ENCODE measurements at regions of chr10 and their contacts with region 1.

Region 1: DNA sequence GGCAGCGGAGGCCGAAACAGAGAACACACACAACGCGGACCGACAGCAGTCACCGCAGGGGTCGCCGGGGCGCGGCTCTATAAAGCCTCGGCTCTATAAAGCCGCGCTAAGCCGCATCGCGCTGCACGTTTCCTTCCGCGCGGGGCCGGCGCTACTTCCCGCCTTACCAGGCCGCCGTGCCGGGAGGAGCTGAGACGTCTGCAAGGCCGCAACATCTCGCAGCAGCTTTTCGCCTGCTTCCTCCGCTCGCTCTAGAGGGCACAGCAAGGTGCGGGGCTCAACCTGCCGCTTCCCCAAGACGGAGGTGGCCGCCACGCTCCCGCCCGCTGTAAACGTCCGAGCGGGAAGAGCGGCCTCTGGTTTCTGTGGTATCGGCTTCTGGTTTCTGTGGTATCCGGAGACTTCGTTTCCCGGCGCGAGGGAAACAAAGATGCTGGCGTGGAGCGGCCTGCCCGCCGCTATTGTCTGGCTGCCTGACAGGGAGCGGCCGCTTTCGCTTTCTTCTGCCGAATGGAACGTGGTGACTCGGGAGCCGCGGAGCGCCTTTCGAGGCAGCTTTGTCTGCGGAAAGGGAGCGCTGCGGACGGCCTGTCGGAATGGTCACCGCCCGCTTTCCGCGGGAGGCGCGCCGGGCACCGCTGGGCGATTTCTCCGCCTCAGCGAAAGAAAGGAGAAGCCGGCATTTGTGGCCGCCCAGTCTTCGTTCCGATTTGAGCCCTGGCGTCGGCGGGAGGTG is 91.8 kb downstream of the SPAG6 start:
- DNase-seq: peak; percentile 89 to 95 (median 92)
- H3K4me3 ChIP-seq: peak overlapping the region; percentile 74
- H3K27ac ChIP-seq: peak overlapping the region; percentile 79 to 96
- H3K4me1 ChIP-seq: peaks cover 5% of the 10 kb centered on the region
- H3K27me3 ChIP-seq: no peaks in the 10 kb centered on the region
- CTCF ChIP-seq: no peak
- EP300 ChIP-seq: no peak
- POLR2A ChIP-seq: peak; percentile 89

Region 2: DNA sequence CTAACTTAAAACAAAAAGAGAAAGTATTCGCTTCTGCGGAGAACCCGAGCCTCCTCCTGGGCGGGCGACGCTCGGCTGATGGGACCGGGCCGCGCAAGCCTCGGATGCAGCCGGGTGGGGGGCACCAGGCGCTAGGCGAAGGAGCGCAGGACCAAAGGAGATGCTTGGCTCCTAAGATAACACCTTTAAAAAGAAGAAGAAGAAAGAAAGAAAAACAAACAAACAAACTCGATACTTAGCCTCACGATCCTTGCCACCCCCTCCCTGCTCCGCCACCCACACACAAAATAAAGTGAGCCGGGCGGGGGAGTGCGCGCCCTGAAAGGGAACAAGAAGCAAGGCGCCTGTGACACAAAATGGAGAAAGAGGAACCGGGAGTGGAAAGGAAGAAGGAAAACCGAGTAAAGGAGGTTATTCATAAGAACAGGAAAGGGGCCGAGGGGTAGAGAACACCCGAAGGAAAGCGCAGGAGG is 185.3 kb before region 1 on chr10:
- intact Hi-C with region 1: loop called in 2 of 4 experiments (anchors 5 to 10 kb)
- DNase-seq: peak; percentile 59 to 77 (median 70)
- H3K4me3 ChIP-seq: peak overlapping the region; percentile 62
- H3K27ac ChIP-seq: peak overlapping the region; percentile 91 to 99
- H3K4me1 ChIP-seq: no peaks in the 10 kb centered on the region
- H3K27me3 ChIP-seq: no peaks in the 10 kb centered on the region
- CTCF ChIP-seq: no peak
- EP300 ChIP-seq: no peak
- POLR2A ChIP-seq: no peak

Region 3: DNA sequence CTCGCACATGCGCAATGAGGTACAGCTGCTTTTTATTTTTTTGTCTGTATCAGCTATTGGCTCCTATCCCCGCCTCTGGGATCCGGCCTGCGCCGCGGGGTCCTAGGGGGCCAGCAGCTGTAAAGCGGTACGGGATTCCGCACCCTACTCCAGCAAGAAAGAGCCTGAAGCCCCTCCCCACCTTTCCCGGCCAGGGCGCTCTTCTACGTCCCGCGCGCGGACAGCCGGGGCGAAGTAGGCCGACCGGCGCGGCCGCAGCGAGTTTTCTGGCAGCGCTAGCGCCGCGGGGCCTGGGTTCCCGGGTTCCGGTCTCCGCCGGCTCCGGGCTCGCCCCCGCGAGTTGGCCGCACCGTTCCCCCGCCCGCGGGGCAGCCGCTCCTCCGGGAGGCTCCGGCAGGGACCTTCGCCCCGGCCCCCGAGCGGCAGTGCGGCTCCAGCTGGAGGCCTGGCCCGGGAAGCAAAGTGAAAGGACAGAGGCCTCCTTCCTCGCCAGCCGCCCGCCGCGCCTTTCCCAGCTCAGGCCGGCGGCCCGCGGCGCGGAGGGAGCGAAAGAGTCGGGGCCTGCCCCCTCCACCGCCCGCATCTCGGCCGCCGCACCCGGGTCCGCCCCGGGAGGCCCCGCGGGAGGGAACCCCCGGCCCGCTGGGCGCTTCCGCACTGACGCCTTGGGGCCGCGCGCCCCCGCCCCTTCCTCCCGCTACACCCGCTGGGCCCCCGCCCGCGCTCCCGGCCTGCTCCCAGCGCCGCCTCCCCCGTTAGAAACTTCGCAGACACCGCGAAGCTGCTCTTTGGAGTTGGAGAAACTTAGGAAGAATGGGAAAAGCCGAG is 96.5 kb before region 1 on chr10:
- intact Hi-C with region 1: loop called in 2 of 4 experiments (anchors 10 kb)
- DNase-seq: peak; percentile 72 to 84 (median 82)
- H3K4me3 ChIP-seq: peak overlapping the region; percentile 80
- H3K27ac ChIP-seq: peak overlapping the region; percentile 94
- H3K4me1 ChIP-seq: peaks cover 1% of the 10 kb centered on the region
- H3K27me3 ChIP-seq: peaks cover 12% of the 10 kb centered on the region
- CTCF ChIP-seq: peak in 1 of 3 donors; percentile 20
- EP300 ChIP-seq: no peak
- POLR2A ChIP-seq: peak; percentile 82

Measured in ovary (tissue), 10 donors.